CD4-positive, alpha-beta memory T cell (primary cell): ENCODE measurements at regions of chr5 and their contacts with region 1.

Region 1: GRCh38 chr5:10987930-10988504 is 227.0 kb upstream of the DAP start:
- DNase-seq: peak; percentile 47 to 60 (median 58)
- H3K4me3 ChIP-seq: no peak overlapping the region
- H3K4me3 Mint-ChIP-seq: peak overlapping the region; percentile 41 to 88 (median 68)
- H3K27ac ChIP-seq: no peak overlapping the region
- H3K27ac Mint-ChIP-seq: peak overlapping the region in 1 of 7 donors; percentile 58
- H3K4me1 ChIP-seq: peaks cover 9% of the 10 kb centered on the region
- H3K4me1 Mint-ChIP-seq: peaks cover 7 to 14% (median 9%) of the 10 kb centered on the region in 4 donors
- H3K27me3 ChIP-seq: no peaks in the 10 kb centered on the region
- H3K27me3 Mint-ChIP-seq: peaks cover 7 to 14% of the 10 kb centered on the region in 2 donors

Region 2: DNA sequence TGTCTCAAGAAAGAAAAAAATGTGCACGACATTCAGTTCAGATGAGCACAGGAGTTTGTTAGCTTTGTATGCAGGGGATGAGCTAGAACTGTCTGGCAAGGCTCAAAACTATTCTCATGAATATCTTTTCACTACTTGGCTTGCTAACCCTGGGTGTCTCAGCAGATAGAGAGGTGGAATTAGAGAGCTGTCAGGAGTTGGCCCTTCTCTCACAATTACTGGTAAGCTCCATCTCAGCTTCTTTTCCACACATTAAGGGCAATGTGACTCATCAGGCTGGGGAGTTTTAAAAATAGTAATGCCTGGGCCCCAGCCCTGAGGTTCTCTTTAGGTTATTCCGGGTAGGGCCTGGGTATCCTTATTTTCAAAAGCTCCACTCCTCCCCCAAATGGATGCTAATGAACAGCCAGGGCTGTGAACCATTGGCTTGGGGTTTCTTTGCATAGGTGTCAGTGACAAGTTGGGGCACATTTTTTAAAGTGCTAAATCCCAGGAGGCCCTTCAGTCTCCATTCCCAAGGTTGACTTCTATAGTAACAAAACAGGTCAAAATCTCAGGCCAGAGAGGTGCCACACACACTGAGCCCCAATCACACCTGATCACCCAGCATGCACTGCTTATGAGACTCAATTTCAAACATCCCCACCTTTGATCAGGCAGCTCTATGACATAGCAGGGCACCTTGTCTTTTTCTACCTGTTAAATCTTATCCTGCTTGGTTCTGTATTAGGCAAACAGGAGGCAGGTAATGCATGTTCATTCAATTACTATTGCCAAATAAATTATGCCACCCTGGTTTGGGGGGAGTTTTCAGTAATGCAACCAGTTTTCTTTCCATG is 12.7 kb after region 1 on chr5:
- CTCF ChIA-PET with region 1: interaction called, 22 read pairs
- POLR2A ChIA-PET with region 1: no interaction called
- intact Hi-C with region 1: no loop called
- DNase-seq: no peak
- H3K4me3 ChIP-seq: no peak overlapping the region
- H3K4me3 Mint-ChIP-seq: no peak overlapping the region
- H3K27ac ChIP-seq: no peak overlapping the region
- H3K27ac Mint-ChIP-seq: no peak overlapping the region
- H3K4me1 ChIP-seq: no peaks in the 10 kb centered on the region
- H3K4me1 Mint-ChIP-seq: no peaks in the 10 kb centered on the region
- H3K27me3 ChIP-seq: no peaks in the 10 kb centered on the region
- H3K27me3 Mint-ChIP-seq: peaks cover 5 to 8% of the 10 kb centered on the region in 2 donors

Region 3: DNA sequence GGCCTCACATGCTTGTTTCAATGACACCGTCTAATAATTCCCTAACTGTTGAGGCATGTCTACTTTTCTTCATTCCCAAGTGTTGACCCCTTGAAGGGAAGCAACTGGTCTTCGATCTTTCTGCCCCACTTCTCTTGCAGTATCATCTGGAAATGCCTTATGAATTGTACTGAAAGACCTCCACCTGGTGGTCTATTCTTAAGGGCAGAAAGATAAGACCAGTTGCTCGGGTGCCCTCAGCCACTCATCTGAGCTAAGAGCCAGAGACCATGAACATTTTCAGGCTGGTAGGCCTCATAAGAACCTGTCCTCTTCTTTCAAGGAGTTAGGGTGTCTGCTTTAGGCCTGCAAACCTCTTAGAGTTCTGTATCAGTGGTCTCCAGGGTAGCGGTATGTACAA is 373.8 kb after region 1 on chr5:
- CTCF ChIA-PET with region 1: no interaction called
- POLR2A ChIA-PET with region 1: no interaction called
- intact Hi-C with region 1: loop called (anchors 5 kb)
- DNase-seq: no peak
- H3K4me3 ChIP-seq: no peak overlapping the region
- H3K4me3 Mint-ChIP-seq: no peak overlapping the region
- H3K27ac ChIP-seq: no peak overlapping the region
- H3K27ac Mint-ChIP-seq: no peak overlapping the region
- H3K4me1 ChIP-seq: no peaks in the 10 kb centered on the region
- H3K4me1 Mint-ChIP-seq: no peaks in the 10 kb centered on the region
- H3K27me3 ChIP-seq: no peaks in the 10 kb centered on the region
- H3K27me3 Mint-ChIP-seq: peaks cover 0 to 1% of the 10 kb centered on the region in 2 donors

Region 4: GRCh38 chr5:11494340-11494739 is 506.3 kb after region 1 on chr5:
- CTCF ChIA-PET with region 1: no interaction called
- POLR2A ChIA-PET with region 1: no interaction called
- intact Hi-C with region 1: loop called (anchors 5 kb)
- DNase-seq: no peak
- H3K4me3 ChIP-seq: no peak overlapping the region
- H3K4me3 Mint-ChIP-seq: no peak overlapping the region
- H3K27ac ChIP-seq: no peak overlapping the region
- H3K27ac Mint-ChIP-seq: no peak overlapping the region
- H3K4me1 ChIP-seq: no peaks in the 10 kb centered on the region
- H3K4me1 Mint-ChIP-seq: no peaks in the 10 kb centered on the region
- H3K27me3 ChIP-seq: no peaks in the 10 kb centered on the region
- H3K27me3 Mint-ChIP-seq: no peaks in the 10 kb centered on the region